ENCODE measurements at regions of chr11 and their contacts with region 1.

Region 1: GRCh38 chr11:123381817-123382554 is 48.1 kb upstream of the GRAMD1B start:
- DNase-seq: peak; percentile 89
- H3K4me3 Mint-ChIP-seq: peak overlapping the region; percentile 52
- H3K27ac Mint-ChIP-seq: no peak overlapping the region
- H3K4me1 Mint-ChIP-seq: peaks cover 42% of the 10 kb centered on the region
- H3K27me3 Mint-ChIP-seq: no peaks in the 10 kb centered on the region

Region 2: GRCh38 chr11:122749005-122749687 is 632.8 kb before region 1 on chr11:
- intact Hi-C with region 1: loop called (anchors 1 kb)
- DNase-seq: peak; percentile 87
- H3K4me3 Mint-ChIP-seq: no peak overlapping the region
- H3K27ac Mint-ChIP-seq: peak overlapping the region; percentile 17
- H3K4me1 Mint-ChIP-seq: peaks cover 20% of the 10 kb centered on the region
- H3K27me3 Mint-ChIP-seq: peaks cover 21% of the 10 kb centered on the region

Region 3: GRCh38 chr11:123338330-123339005 is 43.5 kb before region 1 on chr11:
- intact Hi-C with region 1: loop called (anchors 1 kb)
- DNase-seq: no peak
- H3K4me3 Mint-ChIP-seq: no peak overlapping the region
- H3K27ac Mint-ChIP-seq: no peak overlapping the region
- H3K4me1 Mint-ChIP-seq: peaks cover 6% of the 10 kb centered on the region
- H3K27me3 Mint-ChIP-seq: peaks cover 11% of the 10 kb centered on the region

Region 4: GRCh38 chr11:123407130-123407995 is 25.4 kb after region 1 on chr11:
- intact Hi-C with region 1: loop called (anchors 1 kb)
- DNase-seq: peak; percentile 88
- H3K4me3 Mint-ChIP-seq: peak overlapping the region; percentile 85
- H3K27ac Mint-ChIP-seq: peak overlapping the region; percentile 77
- H3K4me1 Mint-ChIP-seq: peaks cover 53% of the 10 kb centered on the region
- H3K27me3 Mint-ChIP-seq: no peaks in the 10 kb centered on the region

Region 5: DNA sequence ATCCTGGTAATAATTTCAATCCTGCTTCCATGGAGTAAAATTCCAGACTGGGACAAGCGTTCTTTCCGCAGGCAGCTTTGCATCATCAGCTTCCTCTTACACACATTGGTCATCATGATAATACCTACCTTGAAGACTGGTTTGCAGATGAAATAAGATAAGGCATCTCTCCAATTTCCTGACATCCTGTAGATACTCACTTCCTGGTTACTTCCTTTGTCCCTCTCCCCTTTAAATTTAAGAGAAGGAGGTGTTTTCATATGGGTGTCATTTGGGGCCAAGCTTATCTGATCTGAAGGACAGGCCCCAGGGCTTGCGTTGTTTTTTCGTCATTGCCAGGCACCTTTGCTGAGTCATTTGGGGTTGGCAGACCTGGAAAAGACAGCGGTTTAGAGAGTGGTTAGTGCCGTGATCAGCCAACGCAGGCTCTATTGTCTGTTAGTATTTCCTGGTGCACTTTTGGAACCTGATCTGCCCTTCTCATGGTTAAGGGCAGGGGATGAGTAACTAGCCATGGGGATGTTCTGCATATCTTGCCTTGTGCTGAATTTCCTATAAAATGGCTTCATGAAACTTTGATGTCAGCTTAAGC is 72.2 kb after region 1 on chr11:
- intact Hi-C with region 1: loop called (anchors 1 kb)
- DNase-seq: peak; percentile 91
- H3K4me3 Mint-ChIP-seq: peak overlapping the region; percentile 82
- H3K27ac Mint-ChIP-seq: peak overlapping the region; percentile 94
- H3K4me1 Mint-ChIP-seq: peaks cover 79% of the 10 kb centered on the region
- H3K27me3 Mint-ChIP-seq: no peaks in the 10 kb centered on the region

Region 6: GRCh38 chr11:123833095-123833494 is 451.1 kb after region 1 on chr11:
- intact Hi-C with region 1: no loop called
- DNase-seq: no peak
- H3K4me3 Mint-ChIP-seq: no peak overlapping the region
- H3K27ac Mint-ChIP-seq: no peak overlapping the region
- H3K4me1 Mint-ChIP-seq: no peaks in the 10 kb centered on the region
- H3K27me3 Mint-ChIP-seq: peaks cover 4% of the 10 kb centered on the region

Measured in activated CD4-positive, alpha-beta T cell treated with anti-CD3 and anti-CD28 coated beads, Interleukin-2, amount 10 ng/mL, durations not matched to agents 24 days and 14 days (primary cell).